Esophagus squamous epithelium (tissue), 5 donors: ENCODE measurements at regions of chr4 and their contacts with region 1.

Region 1: GRCh38 chr4:140359562-140360427 is 13.7 kb upstream of the SCOC start:
- DNase-seq: no peak
- H3K4me3 ChIP-seq: no peak overlapping the region
- H3K27ac ChIP-seq: no peak overlapping the region
- H3K4me1 ChIP-seq: no peaks in the 10 kb centered on the region
- H3K27me3 ChIP-seq: peaks cover 0 to 9% (median 0%) of the 10 kb centered on the region in 4 donors
- CTCF ChIP-seq: peak; percentile 77 to 86 (median 82)
- POLR2A ChIP-seq: no peak

Region 2: GRCh38 chr4:140609548-140610425 is 250.0 kb after region 1 on chr4:
- intact Hi-C with region 1: loop called (anchors 10 kb)
- DNase-seq: no peak
- H3K4me3 ChIP-seq: no peak overlapping the region
- H3K27ac ChIP-seq: no peak overlapping the region
- H3K4me1 ChIP-seq: peaks cover 0 to 7% (median 0%) of the 10 kb centered on the region in 3 donors
- H3K27me3 ChIP-seq: no peaks in the 10 kb centered on the region
- CTCF ChIP-seq: peak in 5 of 6 experiments; percentile 11 to 63 (median 42)
- POLR2A ChIP-seq: no peak

Region 3: GRCh38 chr4:142218726-142219125 is 1858.9 kb after region 1 on chr4:
- intact Hi-C with region 1: no loop called
- DNase-seq: no peak
- H3K4me3 ChIP-seq: no peak overlapping the region
- H3K27ac ChIP-seq: no peak overlapping the region
- H3K4me1 ChIP-seq: no peaks in the 10 kb centered on the region
- H3K27me3 ChIP-seq: no peaks in the 10 kb centered on the region
- CTCF ChIP-seq: no peak
- POLR2A ChIP-seq: no peak